ENCODE measurements at regions of chr9 and their contacts with region 1.

Region 1: GRCh38 chr9:122264360-122265148 is at the starts of genes MRRF and RBM18:
- DNase-seq: peak; percentile 78
- ATAC-seq: peak; percentile 85
- H3K4me3 ChIP-seq: peak within 1 kb of the TSS; percentile 69 to 83 (median 75)
- H3K27ac ChIP-seq: peak within 1 kb of the TSS; percentile 84
- H3K4me1 ChIP-seq: peaks cover 44% of the 10 kb centered on the region
- H3K27me3 ChIP-seq: no peaks in the 10 kb centered on the region; a peak in 1 of 5 replicates
- CTCF ChIP-seq: peak; percentile 44; the same call in 1 of the 2 replicates
- EP300 ChIP-seq: peak in 1 of 2 experiments; percentile 66; a peak in 1 of 4 replicates
- POLR2A ChIP-seq: peak; percentile 75 to 92
- RAD21 ChIP-seq: 0 out of 2 replicates have a peak, but pooled peaks have one; percentile 26
- total RNA-seq, gene MRRF: 37.3 and 47.2 TPM in 2 replicates
- total RNA-seq, gene RBM18: 16.6 and 29.5 TPM in 2 replicates

Region 2: GRCh38 chr9:122099271-122099869 is 165.2 kb before region 1 on chr9:
- CTCF ChIA-PET with region 1: no interaction called
- POLR2A ChIA-PET with region 1: no interaction called
- in situ Hi-C with region 1: no loop called
- intact Hi-C with region 1: loop called (anchors 5 kb)
- DNase-seq: peak; percentile 60
- ATAC-seq: peak; percentile 88
- H3K4me3 ChIP-seq: peak overlapping the region in 1 of 3 experiments; percentile 56; a peak in 1 of 6 replicates
- H3K27ac ChIP-seq: no peak overlapping the region
- H3K4me1 ChIP-seq: peaks cover 23% of the 10 kb centered on the region
- H3K27me3 ChIP-seq: peaks cover 0 to 13% of the 10 kb centered on the region in 2 experiments
- CTCF ChIP-seq: peak; percentile 83
- EP300 ChIP-seq: no peak
- POLR2A ChIP-seq: no peak
- RAD21 ChIP-seq: peak; percentile 81

Region 3: GRCh38 chr9:122113574-122113973 is 151.0 kb before region 1 on chr9:
- CTCF ChIA-PET with region 1: no interaction called
- POLR2A ChIA-PET with region 1: no interaction called
- in situ Hi-C with region 1: no loop called
- intact Hi-C with region 1: no loop called
- DNase-seq: no peak
- ATAC-seq: no peak
- H3K4me3 ChIP-seq: no peak overlapping the region
- H3K27ac ChIP-seq: no peak overlapping the region
- H3K4me1 ChIP-seq: peaks cover under 1% of the 10 kb centered on the region; the same call in 1 of the 2 replicates
- H3K27me3 ChIP-seq: peaks cover 3 to 6% of the 10 kb centered on the region in 2 experiments; a peak in 3 of 5 replicates
- CTCF ChIP-seq: no peak
- EP300 ChIP-seq: no peak
- POLR2A ChIP-seq: no peak
- RAD21 ChIP-seq: no peak

Region 4: DNA sequence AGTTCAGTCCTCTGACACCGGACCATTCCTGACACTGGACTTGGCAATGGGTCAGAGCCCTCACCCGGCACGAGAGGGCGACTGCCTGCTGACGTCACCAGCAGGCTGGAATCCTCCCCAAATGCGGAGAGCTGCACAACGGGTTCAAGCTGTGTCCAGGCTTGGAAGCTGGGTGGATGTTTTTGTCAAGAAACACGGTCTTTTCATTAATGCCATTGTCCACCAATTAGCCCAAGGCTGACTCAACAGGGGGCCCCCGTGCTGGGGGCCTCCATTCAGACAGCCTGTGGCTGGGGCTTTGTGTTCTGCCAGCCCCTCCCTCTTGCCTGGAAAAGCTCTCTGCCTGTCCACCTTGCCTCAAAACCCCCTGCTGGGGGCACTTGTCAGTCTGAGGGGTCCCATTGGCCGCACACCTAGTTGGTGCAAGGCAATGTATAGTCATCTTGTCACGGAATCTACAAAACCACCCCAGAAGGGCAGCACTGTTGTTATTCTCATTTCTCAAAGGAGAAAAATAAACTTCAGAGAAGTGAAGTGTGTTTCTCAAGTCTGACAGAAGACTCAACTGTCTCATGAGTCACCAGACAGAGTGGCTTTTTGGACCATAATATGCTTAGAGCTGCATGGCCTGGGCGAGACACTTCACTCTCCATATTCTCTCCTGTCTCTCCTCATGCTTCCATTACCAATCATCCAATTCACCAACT is 129.6 kb before region 1 on chr9:
- CTCF ChIA-PET with region 1: no interaction called
- POLR2A ChIA-PET with region 1: interaction called, 5 read pairs
- in situ Hi-C with region 1: no loop called
- intact Hi-C with region 1: loop called (anchors 5 kb)
- DNase-seq: no peak
- ATAC-seq: no peak
- H3K4me3 ChIP-seq: peak overlapping the region in 1 of 3 experiments; percentile 8; a peak in 1 of 6 replicates
- H3K27ac ChIP-seq: no peak overlapping the region
- H3K4me1 ChIP-seq: peaks cover 68% of the 10 kb centered on the region
- H3K27me3 ChIP-seq: peaks cover 0 to 15% of the 10 kb centered on the region in 2 experiments; a peak in 1 of 5 replicates
- CTCF ChIP-seq: peak; percentile 19; the same call in 1 of the 2 replicates
- EP300 ChIP-seq: no peak
- POLR2A ChIP-seq: no peak
- RAD21 ChIP-seq: no peak

Region 5: GRCh38 chr9:122190609-122191381 is 73.8 kb before region 1 on chr9:
- CTCF ChIA-PET with region 1: no interaction called
- POLR2A ChIA-PET with region 1: interaction called, 10 read pairs
- in situ Hi-C with region 1: no loop called
- intact Hi-C with region 1: loop called (anchors 5 kb)
- DNase-seq: peak; percentile 52
- ATAC-seq: peak; percentile 17
- H3K4me3 ChIP-seq: no peak overlapping the region
- H3K27ac ChIP-seq: no peak overlapping the region
- H3K4me1 ChIP-seq: peaks cover 75% of the 10 kb centered on the region
- H3K27me3 ChIP-seq: no peaks in the 10 kb centered on the region
- CTCF ChIP-seq: peak; percentile 33; the same call in 1 of the 2 replicates
- EP300 ChIP-seq: peak in 1 of 2 experiments; percentile 81; a peak in 2 of 4 replicates
- POLR2A ChIP-seq: no peak
- RAD21 ChIP-seq: no peak

Region 6: DNA sequence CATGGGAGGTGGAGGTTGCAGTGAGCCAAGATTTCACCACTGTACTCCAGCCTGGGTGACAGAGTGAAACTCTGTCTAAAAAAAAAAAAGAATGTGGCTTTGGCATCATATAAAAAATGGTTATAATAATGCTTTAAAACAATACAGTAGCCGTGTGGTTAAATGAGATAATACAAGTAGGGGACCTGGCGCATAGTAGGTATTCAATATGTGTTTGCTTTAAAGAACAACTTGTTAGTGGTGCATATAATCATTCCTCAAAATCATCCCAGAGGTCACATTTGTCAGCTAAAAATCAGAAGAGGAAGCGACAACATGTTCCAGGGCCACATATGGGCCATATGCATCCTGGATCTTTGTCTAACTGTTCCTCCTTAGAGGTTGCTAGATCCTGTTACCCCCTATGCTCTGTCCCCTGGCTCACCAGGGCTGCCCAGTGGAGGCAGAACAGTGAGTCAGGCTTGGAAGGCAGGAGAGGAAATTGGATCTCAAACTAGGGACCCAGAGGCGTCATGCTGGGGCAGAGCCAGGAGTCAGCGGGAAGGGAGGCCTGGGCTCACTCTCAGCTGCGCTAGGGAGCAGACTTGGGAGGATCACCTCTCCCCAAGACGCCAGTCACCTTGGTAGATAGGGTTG is 63.5 kb before region 1 on chr9:
- CTCF ChIA-PET with region 1: no interaction called
- POLR2A ChIA-PET with region 1: no interaction called
- in situ Hi-C with region 1: no loop called
- intact Hi-C with region 1: no loop called
- DNase-seq: no peak
- ATAC-seq: no peak
- H3K4me3 ChIP-seq: no peak overlapping the region
- H3K27ac ChIP-seq: no peak overlapping the region
- H3K4me1 ChIP-seq: peaks cover 20% of the 10 kb centered on the region
- H3K27me3 ChIP-seq: no peaks in the 10 kb centered on the region
- CTCF ChIP-seq: no peak
- EP300 ChIP-seq: no peak
- POLR2A ChIP-seq: no peak
- RAD21 ChIP-seq: no peak

Region 7: GRCh38 chr9:122213589-122214413 is 50.8 kb before region 1 on chr9:
- CTCF ChIA-PET with region 1: no interaction called
- POLR2A ChIA-PET with region 1: interaction called, 11 read pairs
- in situ Hi-C with region 1: no loop called
- intact Hi-C with region 1: no loop called
- DNase-seq: peak; percentile 83
- ATAC-seq: peak; percentile 94
- H3K4me3 ChIP-seq: peak overlapping the region; percentile 15 to 75 (median 62); a peak in 5 of 6 replicates
- H3K27ac ChIP-seq: no peak overlapping the region
- H3K4me1 ChIP-seq: peaks cover 44% of the 10 kb centered on the region
- H3K27me3 ChIP-seq: peaks cover 2 to 34% of the 10 kb centered on the region in 2 experiments; a peak in 4 of 5 replicates
- CTCF ChIP-seq: no peak
- EP300 ChIP-seq: no peak
- POLR2A ChIP-seq: 0 out of 4 replicates have a peak, but pooled peaks of 1 of the 2 experiments have one; percentile 32
- RAD21 ChIP-seq: peak; percentile 21; the same call in 1 of the 2 replicates

Region 8: DNA sequence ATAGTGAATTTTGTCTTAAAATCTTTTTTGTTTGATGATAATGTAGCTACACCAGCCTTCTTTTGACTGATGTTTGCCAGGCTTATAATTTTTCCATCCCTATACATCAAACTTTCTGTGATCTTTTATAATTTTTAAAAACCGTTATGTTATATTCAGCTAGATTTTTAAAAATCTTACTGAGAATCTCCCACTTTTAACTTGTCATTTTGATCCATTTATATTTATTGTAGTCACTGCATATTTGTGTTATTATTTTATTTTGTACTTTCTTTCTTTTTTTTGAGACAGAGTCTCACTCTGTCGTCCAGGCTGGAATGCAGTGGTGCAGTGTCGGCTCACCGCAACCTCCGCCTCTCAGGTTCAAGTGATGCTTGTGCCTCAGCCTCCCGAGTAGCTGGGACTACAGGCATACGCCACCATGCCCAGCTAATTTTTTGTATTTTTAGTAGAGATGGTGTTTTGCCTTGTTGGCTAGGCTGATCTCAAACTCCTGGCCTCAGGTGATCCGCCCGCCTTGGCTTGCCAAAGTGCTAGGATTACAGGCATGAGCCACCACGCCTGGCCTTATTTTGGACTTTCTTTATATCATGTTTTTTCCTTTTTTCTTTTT is 12.8 kb after region 1 on chr9:
- CTCF ChIA-PET with region 1: no interaction called
- POLR2A ChIA-PET with region 1: interaction called, 16 read pairs
- in situ Hi-C with region 1: no loop called
- intact Hi-C with region 1: no loop called
- DNase-seq: no peak
- ATAC-seq: no peak
- H3K4me3 ChIP-seq: no peak overlapping the region
- H3K27ac ChIP-seq: no peak overlapping the region
- H3K4me1 ChIP-seq: peaks cover 14% of the 10 kb centered on the region
- H3K27me3 ChIP-seq: no peaks in the 10 kb centered on the region
- CTCF ChIP-seq: no peak
- EP300 ChIP-seq: no peak
- POLR2A ChIP-seq: no peak
- RAD21 ChIP-seq: no peak